ENCODE measurements at regions of chrX and their contacts with region 1.

Region 1: GRCh38 chrX:135384161-135384836 is 37.4 kb upstream of the SMIM10L2A start:
- DNase-seq: no peak
- H3K4me3 ChIP-seq: no peak overlapping the region
- H3K27ac ChIP-seq: no peak overlapping the region
- H3K4me1 ChIP-seq: peaks cover 20% of the 10 kb centered on the region
- H3K27me3 ChIP-seq: no peaks in the 10 kb centered on the region
- CTCF ChIP-seq: no peak
- POLR2A ChIP-seq: no peak

Region 2: GRCh38 chrX:134774190-134775048 is 609.9 kb before region 1 on chrX:
- CTCF ChIA-PET with region 1: no interaction called
- POLR2A ChIA-PET with region 1: no interaction called
- dilution Hi-C with region 1: no loop called
- intact Hi-C with region 1: no loop called
- DNase-seq: no peak
- H3K4me3 ChIP-seq: no peak overlapping the region
- H3K27ac ChIP-seq: no peak overlapping the region
- H3K4me1 ChIP-seq: no peaks in the 10 kb centered on the region
- H3K27me3 ChIP-seq: no peaks in the 10 kb centered on the region
- CTCF ChIP-seq: no peak
- POLR2A ChIP-seq: no peak

Region 3: GRCh38 chrX:135345107-135345589 is 39.2 kb before region 1 on chrX:
- CTCF ChIA-PET with region 1: no interaction called
- POLR2A ChIA-PET with region 1: no interaction called
- dilution Hi-C with region 1: no loop called
- intact Hi-C with region 1: loop called (anchors 1 kb)
- DNase-seq: peak; percentile 81
- H3K4me3 ChIP-seq: peak overlapping the region; percentile 48 to 88 (median 64)
- H3K27ac ChIP-seq: peak overlapping the region; percentile 96
- H3K4me1 ChIP-seq: peaks cover 18% of the 10 kb centered on the region
- H3K27me3 ChIP-seq: no peaks in the 10 kb centered on the region
- CTCF ChIP-seq: no peak
- POLR2A ChIP-seq: no peak

Region 4: GRCh38 chrX:135396109-135396508 is 11.8 kb after region 1 on chrX:
- CTCF ChIA-PET with region 1: no interaction called
- POLR2A ChIA-PET with region 1: no interaction called
- dilution Hi-C with region 1: no loop called
- intact Hi-C with region 1: no loop called
- DNase-seq: peak; percentile 75
- H3K4me3 ChIP-seq: no peak overlapping the region
- H3K27ac ChIP-seq: no peak overlapping the region
- H3K4me1 ChIP-seq: peaks cover 5% of the 10 kb centered on the region
- H3K27me3 ChIP-seq: no peaks in the 10 kb centered on the region
- CTCF ChIP-seq: no peak
- POLR2A ChIP-seq: no peak

Region 5: DNA sequence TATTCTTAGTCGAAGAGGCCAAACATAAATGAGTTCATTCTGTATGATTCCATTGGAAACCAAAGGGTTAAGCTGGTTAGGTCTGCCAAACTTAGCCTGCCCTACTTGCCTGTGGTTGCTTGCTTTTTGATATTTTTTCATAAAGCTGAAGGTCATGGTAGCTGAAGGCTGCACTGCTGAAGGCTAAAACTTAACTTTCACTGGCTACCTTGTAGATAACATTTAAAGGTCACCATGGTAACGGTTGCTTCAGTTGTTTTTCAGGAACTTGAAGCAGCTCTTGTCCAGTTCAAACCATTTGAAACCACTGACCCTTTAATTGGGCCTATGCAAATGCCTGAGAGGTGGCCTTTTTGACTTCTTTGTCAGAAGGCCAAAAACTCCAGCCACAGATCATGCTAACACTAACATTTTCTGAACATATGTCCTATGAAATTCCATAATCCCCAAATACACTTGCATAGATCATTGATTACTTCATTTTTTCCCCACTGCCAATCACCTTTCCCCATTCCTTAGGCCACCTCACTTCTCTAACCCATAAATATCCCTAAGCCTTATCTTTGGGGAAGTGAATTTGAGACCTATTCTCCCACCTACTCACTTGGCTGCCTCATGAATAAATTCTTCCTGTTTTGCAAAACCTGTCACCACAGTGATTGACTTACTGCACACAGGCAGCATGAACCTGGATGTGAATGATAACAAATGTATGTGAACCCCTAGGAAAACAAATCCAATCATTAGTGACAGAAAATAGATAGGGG is 26.7 kb after region 1 on chrX:
- CTCF ChIA-PET with region 1: no interaction called
- POLR2A ChIA-PET with region 1: no interaction called
- dilution Hi-C with region 1: no loop called
- intact Hi-C with region 1: no loop called
- DNase-seq: no peak
- H3K4me3 ChIP-seq: no peak overlapping the region
- H3K27ac ChIP-seq: no peak overlapping the region
- H3K4me1 ChIP-seq: no peaks in the 10 kb centered on the region
- H3K27me3 ChIP-seq: peaks cover 3% of the 10 kb centered on the region in 2 experiments
- CTCF ChIP-seq: no peak
- POLR2A ChIP-seq: no peak